Activated T-helper 1 cell treated with anti-CD3 and anti-CD28 coated beads, Interleukin-12 subunit alpha, Interleukin-12 subunit beta, Interleukin-2, Interleukin-4 antibody, amounts not matched to agents 30 ng/mL and 10 ng/mL and 1 ng/mL, durations not matched to agents 14 hours and 24 hours and 36 hours (primary cell): ENCODE measurements at regions of chr1 and their contacts with region 1.

Region 1: DNA sequence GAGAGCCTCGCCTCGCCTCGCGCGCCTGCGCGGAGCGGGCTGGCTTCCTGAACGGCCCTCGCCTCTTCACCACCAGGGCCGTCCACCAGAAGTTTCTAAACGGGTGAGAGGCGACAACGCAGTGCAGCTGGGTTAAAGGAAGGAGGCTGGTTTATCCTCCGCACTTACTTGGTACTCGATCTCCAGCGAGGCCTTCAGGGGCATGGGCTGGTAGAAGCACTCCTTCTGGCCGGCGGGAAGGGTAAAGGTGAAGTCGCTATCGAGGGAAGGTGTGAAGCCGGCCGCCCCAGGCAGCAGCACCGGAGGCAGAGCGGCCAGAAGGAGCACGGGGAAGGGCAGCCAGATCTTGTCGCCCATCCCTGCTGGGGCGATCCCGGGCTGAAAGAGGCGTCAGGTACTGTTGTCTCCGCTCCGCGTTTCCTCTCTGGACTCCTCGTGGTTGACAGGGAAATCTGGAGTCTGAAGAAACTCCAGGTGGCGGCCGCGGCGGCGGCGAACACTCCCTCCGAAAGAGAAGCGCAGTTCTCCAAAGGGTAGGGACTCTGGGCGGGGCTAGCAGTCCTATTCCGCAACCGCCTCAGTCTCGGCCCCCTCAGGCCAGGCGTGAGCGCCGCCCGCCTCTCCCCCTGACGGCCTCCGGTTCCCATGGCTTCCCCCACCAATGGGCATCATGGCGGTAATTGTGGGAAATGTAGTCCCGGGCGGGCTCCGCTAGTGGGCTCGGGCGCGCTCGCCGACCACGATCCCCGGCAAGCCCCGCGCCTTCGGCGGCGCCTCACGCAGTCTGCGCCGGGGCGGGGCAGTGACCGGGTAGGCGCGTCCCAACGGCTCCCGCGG is at the start of gene TMED5:
- DNase-seq: peak; percentile 98
- H3K4me3 Mint-ChIP-seq: peak within 1 kb of the TSS; percentile 93
- H3K27ac Mint-ChIP-seq: peak within 1 kb of the TSS; percentile 96
- H3K4me1 Mint-ChIP-seq: peaks cover 57% of the 10 kb centered on the region
- H3K27me3 Mint-ChIP-seq: no peaks in the 10 kb centered on the region
- total RNA-seq, gene TMED5: 46.7 and 48.7 TPM in 2 replicates

Region 2: GRCh38 chr1:92831762-92832536 is 348.2 kb before region 1 on chr1 and contains the start of gene RPL5:
- intact Hi-C with region 1: loop called (anchors 1 kb)
- DNase-seq: peak; percentile 96
- H3K4me3 Mint-ChIP-seq: peak within 1 kb of the TSS; percentile 96
- H3K27ac Mint-ChIP-seq: peak within 1 kb of the TSS; percentile 97
- H3K4me1 Mint-ChIP-seq: peaks cover 35% of the 10 kb centered on the region
- H3K27me3 Mint-ChIP-seq: peaks cover 2% of the 10 kb centered on the region
- total RNA-seq, gene RPL5: 1,115 and 1,120 TPM in 2 replicates

Region 3: GRCh38 chr1:92980732-92981647 is 199.1 kb before region 1 on chr1:
- intact Hi-C with region 1: loop called (anchors 2 kb)
- DNase-seq: peak; percentile 55
- H3K4me3 Mint-ChIP-seq: peak overlapping the region; percentile 60
- H3K27ac Mint-ChIP-seq: peak overlapping the region; percentile 97
- H3K4me1 Mint-ChIP-seq: peaks cover 67% of the 10 kb centered on the region
- H3K27me3 Mint-ChIP-seq: no peaks in the 10 kb centered on the region

Region 4: GRCh38 chr1:93042187-93043056 is 137.7 kb before region 1 on chr1:
- intact Hi-C with region 1: loop called (anchors 1 kb)
- DNase-seq: peak; percentile 53
- H3K4me3 Mint-ChIP-seq: peak overlapping the region; percentile 74
- H3K27ac Mint-ChIP-seq: peak overlapping the region; percentile 84
- H3K4me1 Mint-ChIP-seq: peaks cover 37% of the 10 kb centered on the region
- H3K27me3 Mint-ChIP-seq: no peaks in the 10 kb centered on the region

Region 5: DNA sequence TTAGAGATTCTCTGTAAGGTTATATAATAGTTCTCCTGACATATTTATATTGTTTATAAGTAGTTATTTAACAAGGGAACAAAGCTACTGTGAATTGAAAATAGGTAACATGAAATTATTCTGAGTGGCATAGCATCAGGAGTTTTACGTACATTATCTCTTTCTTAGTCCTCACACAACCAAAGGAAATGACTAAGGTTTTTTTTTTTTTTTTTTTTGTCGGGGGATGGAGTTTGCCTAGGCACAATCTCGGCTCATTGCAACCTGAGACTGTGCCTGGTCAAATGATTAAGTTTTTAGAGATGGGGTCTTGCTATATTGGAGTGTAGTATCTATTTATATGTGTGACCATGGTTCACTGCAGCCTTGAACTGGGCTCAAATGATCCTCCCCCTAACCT is 24.8 kb before region 1 on chr1:
- intact Hi-C with region 1: loop called (anchors 1 kb)
- DNase-seq: no peak
- H3K4me3 Mint-ChIP-seq: no peak overlapping the region
- H3K27ac Mint-ChIP-seq: peak overlapping the region; percentile 31
- H3K4me1 Mint-ChIP-seq: peaks cover 15% of the 10 kb centered on the region
- H3K27me3 Mint-ChIP-seq: no peaks in the 10 kb centered on the region

Region 6: DNA sequence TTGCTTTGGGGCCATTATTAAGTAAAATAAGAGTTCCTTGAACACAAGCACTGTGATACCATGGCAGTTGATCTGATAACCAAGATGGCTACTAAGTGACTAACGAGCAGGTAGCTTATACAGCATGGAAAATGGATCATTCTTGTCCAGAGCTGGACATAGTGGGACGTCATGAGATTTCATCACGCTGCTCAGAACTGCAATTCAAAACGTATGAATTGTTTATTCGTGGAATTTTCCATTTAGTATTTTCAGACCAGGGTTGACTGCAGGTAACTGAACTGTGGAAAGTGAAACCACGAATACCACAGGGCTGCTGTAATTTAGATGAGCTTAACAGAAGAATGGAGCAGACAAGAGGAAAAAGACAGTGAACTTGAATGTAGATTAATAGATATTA is 39.3 kb after region 1 on chr1:
- intact Hi-C with region 1: loop called (anchors 1 kb)
- DNase-seq: peak; percentile 11
- H3K4me3 Mint-ChIP-seq: peak overlapping the region; percentile 72
- H3K27ac Mint-ChIP-seq: peak overlapping the region; percentile 87
- H3K4me1 Mint-ChIP-seq: peaks cover 22% of the 10 kb centered on the region
- H3K27me3 Mint-ChIP-seq: no peaks in the 10 kb centered on the region